ENCODE measurements at regions of chr6 and their contacts with region 1.

Region 1: DNA sequence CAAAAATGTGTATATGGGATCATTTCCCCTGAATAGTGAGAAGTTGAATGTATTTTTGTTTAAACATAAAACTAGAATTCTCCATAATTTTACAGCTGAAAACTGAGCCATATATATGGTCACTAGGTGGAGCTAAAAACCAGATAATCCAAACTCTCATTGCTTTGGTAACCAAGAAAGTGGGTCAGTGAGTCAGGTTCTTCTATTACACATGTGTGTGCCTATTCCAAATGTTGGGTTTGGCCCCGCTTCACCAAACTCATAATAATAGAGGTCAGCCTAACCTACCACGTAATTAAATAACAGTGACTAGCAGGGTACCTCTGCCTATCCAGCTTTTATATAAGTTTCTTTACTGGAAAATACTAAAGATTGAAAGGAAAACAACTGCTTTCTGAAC is 19.3 kb upstream of the RNGTT start:
- DNase-seq: no peak
- ATAC-seq: peak; percentile 74
- H3K4me3 Mint-ChIP-seq: no peak overlapping the region
- H3K27ac Mint-ChIP-seq: no peak overlapping the region
- H3K4me1 Mint-ChIP-seq: peaks cover 2% of the 10 kb centered on the region
- H3K27me3 Mint-ChIP-seq: peaks cover 9% of the 10 kb centered on the region

Region 2: DNA sequence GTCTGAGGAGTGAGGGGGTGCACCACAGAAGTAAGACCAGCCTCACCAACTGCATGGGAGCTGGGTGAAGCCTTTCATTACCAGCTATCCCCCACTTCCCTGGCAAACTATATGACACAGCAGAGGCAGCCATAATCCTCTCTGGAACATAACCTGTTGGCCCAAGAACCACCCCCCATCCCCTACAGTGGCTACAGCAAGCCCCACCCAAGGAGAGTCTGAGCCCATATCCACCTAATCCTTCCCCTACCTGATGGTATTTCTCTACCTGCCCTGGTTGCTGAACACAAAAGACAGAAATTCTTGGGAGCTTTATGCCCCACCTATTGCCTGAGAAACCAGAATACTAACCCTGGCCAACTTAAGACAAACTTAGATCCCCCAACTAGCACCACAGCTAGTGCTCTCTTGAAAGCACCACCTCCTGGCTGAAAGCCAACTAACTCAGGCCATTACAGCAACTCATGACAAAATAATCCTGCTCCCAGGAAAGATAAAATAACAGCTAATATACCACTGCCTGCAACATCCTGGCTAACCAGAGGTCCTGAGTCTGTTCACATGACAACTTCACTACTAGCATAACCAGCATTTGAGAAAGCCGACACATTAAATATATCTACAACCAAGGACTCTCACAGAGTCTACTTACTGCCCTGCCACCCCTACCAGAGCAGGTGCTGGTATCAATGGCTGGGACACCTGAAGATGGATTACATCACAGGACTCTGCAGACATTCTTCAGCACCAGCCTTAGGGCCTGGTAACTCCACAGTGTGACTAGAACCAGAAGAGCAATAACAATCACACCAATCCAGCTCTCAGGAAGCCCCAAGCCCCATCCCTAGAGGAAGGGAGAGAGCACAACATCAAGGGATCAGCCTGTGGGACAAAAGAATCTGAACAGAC is 30.4 kb before region 1 on chr6:
- CTCF ChIA-PET with region 1: no interaction called
- POLR2A ChIA-PET with region 1: no interaction called
- DNase-seq: no peak
- ATAC-seq: no peak
- H3K4me3 Mint-ChIP-seq: no peak overlapping the region
- H3K27ac Mint-ChIP-seq: no peak overlapping the region
- H3K4me1 Mint-ChIP-seq: peaks cover 5% of the 10 kb centered on the region
- H3K27me3 Mint-ChIP-seq: no peaks in the 10 kb centered on the region

Region 3: DNA sequence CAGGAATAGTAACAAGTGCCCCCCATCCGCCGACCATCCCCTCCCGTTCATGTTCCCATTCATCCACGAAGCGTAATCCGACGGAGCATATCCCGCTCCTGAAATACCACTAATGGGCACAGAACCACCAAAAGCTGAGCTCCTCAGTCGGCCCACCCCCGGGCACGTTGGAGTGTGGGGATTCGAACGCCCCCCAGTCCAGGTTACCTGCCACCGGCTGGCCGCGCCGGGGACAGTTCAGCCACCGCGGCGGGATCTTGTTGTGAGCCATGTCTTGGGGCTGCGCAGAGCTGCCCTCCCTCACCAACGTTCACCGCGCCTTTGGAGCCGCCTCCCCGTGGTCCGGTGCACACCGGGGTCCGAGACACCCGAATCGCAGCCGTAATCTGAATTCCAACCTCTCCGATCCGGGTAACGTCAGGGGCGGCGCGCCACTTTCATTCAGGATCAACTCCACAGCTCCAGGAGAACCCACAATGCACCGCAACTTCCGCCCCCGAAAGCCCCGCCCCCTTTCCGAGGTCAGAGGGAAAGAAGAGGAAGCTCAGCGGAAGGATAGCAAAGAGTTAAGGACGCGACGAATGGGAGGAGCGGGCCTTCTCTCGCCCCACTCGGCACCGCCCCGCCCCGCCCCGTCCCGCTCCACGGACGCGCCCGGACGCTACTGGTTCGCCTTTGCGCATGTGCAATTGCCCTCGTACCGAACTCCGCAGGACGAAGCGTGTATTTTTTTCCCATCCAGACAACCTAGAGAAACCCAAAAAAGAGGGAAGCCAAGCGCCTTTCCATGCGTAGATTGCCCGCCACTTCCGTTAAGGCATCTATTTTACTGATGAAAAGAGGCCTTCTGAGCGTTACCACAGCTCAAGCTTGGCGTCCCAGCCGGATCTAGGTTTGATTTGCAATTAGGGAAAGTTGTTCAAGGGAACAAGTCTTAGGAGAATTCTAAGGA is 19.3 kb before region 1 on chr6 and contains the start of gene RNGTT:
- CTCF ChIA-PET with region 1: interaction called, 13 read pairs
- POLR2A ChIA-PET with region 1: no interaction called
- DNase-seq: peak; percentile 98
- ATAC-seq: peak; percentile 100
- H3K4me3 Mint-ChIP-seq: peak within 1 kb of the TSS; percentile 99
- H3K27ac Mint-ChIP-seq: peak within 1 kb of the TSS; percentile 95
- H3K4me1 Mint-ChIP-seq: peaks cover 33% of the 10 kb centered on the region
- H3K27me3 Mint-ChIP-seq: no peaks in the 10 kb centered on the region
- total RNA-seq, gene RNGTT: 20.4 to 23.5 TPM

Region 4: DNA sequence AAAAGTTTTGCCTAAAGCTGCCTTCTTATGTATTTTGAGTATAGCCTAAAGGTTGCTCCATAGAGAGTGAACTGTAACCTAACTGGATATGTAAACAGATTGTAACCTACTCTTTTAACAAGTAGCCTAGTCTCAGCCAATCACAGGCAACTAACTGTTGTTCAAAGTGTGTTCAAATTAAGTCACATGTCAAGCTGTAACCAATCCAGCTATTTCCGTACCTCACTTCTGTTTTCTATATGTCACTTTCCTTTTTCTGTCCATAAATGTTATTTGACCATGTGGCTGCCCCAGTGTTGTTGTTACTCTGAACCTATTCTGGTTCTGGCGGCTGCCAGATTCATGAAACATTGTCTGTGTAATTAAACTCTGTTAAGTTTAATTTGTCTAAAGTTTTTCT is 28.1 kb after region 1 on chr6:
- CTCF ChIA-PET with region 1: interaction called, 10 read pairs
- POLR2A ChIA-PET with region 1: no interaction called
- DNase-seq: no peak
- ATAC-seq: no peak
- H3K4me3 Mint-ChIP-seq: no peak overlapping the region
- H3K27ac Mint-ChIP-seq: no peak overlapping the region
- H3K4me1 Mint-ChIP-seq: peaks cover 15% of the 10 kb centered on the region
- H3K27me3 Mint-ChIP-seq: no peaks in the 10 kb centered on the region

Region 5: GRCh38 chr6:89117211-89118108 is 134.7 kb after region 1 on chr6 and contains the start of gene SRSF12:
- CTCF ChIA-PET with region 1: interaction called, 15 read pairs
- POLR2A ChIA-PET with region 1: no interaction called
- DNase-seq: peak; percentile 43
- ATAC-seq: peak; percentile 94
- H3K4me3 Mint-ChIP-seq: peak within 1 kb of the TSS; percentile 78
- H3K27ac Mint-ChIP-seq: no peak within 1 kb of the TSS
- H3K4me1 Mint-ChIP-seq: peaks cover 8% of the 10 kb centered on the region
- H3K27me3 Mint-ChIP-seq: peaks cover 25% of the 10 kb centered on the region
- total RNA-seq, gene SRSF12: not detected

Region 6: DNA sequence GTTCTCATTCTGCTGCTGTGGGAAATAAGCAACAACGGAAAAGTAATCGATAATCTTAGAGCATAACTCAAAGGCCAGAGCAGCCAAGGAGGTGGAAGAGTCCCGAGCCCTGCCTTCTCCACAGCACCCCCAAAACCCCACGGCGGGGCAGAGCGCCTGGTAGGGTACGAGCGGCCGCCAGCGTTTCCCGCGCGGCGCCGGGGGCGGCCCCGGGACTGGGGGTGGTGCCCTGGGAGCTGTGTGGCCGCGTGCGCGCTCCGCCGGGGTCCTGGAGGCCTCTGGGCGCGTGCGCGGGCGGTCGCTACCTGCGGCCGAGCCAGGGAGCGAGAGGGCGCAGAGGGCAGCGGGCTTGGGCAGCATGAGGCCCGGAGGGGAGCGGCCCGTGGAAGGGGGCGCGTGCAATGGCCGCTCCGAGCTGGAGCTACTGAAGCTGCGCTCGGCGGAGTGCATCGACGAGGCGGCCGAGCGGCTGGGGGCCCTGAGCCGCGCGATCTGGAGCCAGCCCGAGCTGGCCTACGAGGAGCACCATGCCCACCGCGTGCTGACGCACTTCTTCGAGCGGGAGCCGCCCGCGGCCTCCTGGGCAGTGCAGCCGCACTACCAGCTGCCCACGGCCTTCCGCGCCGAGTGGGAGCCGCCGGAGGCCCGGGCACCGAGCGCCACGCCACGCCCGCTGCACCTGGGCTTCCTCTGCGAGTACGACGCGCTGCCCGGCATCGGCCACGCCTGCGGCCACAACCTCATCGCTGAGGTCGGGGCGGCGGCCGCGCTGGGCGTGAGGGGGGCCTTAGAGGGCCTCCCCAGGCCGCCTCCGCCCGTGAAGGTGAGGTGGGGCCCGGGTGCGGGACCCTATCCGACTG is 163.3 kb after region 1 on chr6 and contains the start of gene PM20D2:
- CTCF ChIA-PET with region 1: interaction called, 27 read pairs
- POLR2A ChIA-PET with region 1: no interaction called
- DNase-seq: peak; percentile 78
- ATAC-seq: peak; percentile 87
- H3K4me3 Mint-ChIP-seq: peak within 1 kb of the TSS; percentile 88
- H3K27ac Mint-ChIP-seq: peak within 1 kb of the TSS; percentile 96
- H3K4me1 Mint-ChIP-seq: peaks cover 38% of the 10 kb centered on the region
- H3K27me3 Mint-ChIP-seq: no peaks in the 10 kb centered on the region
- total RNA-seq, gene PM20D2: 22.5 to 24.5 TPM

Measured in activated CD8-positive, alpha-beta T cell treated with anti-CD3 and anti-CD28 coated beads, Interleukin-2, amount 10 ng/mL, durations not matched to agents 7 days and 5 days (primary cell).